Left lung (tissue), 14 donors: ENCODE measurements at regions of chr1 and their contacts with region 1.

Region 1: DNA sequence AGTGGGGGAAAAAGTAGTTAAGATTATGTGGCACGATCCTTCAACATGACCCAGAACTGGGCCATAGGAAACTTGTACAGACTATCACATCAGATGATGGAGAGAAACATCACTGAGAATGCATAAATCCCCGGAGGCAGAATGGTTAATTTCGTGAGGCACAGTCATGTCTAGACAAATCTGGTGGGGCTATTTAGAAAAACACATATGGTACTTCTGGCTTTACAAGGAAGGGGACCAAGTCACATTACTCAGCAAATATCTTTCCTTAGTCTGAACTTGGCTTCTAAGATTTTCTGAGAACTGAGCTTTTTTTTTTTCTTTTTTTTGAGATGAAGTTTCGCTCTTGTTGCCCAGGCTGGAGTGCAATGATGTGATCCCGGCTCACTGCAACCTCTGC is 9.2 kb upstream of the UQCRHL start:
- DNase-seq: no peak
- ATAC-seq: no peak
- H3K4me3 ChIP-seq: no peak overlapping the region
- H3K27ac ChIP-seq: no peak overlapping the region
- H3K4me1 ChIP-seq: peaks cover 0 to 7% of the 10 kb centered on the region in 2 donors
- H3K27me3 ChIP-seq: no peaks in the 10 kb centered on the region
- CTCF ChIP-seq: no peak

Region 2: DNA sequence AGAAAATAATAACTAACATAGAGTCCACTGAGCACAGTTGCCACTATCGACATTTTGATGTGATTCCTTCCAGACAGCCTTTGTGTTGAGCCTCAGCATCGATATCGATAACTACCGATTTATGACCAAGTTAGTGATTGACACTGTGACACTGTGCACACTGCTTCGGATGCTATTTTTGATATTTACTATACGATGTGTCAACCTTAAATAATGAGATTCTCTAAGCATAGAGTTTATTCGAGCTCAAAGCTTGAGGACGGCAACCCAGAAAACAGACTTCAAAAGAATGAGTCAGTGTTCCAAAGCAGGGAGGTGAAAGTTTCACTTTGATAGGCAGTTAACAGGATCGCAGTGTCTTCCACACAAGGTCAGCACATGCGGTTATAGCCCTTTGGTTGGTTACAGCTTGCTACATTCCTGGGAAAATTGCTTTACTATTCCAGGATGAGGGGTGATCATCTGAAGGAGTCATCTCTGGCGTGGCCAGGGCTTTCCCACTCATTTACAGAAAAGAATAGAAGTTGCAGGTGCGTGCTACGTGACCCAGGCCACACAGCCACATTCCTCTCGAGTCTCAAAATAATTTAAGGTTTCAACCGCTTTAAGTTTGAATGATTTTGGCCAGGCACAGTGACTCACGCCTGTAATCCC is 460.6 kb before region 1 on chr1:
- intact Hi-C with region 1: no loop called
- DNase-seq: no peak
- ATAC-seq: no peak
- H3K4me3 ChIP-seq: no peak overlapping the region
- H3K27ac ChIP-seq: no peak overlapping the region
- H3K4me1 ChIP-seq: no peaks in the 10 kb centered on the region
- H3K27me3 ChIP-seq: no peaks in the 10 kb centered on the region
- CTCF ChIP-seq: no peak

Region 3: GRCh38 chr1:15684468-15685291 is 132.0 kb before region 1 on chr1:
- intact Hi-C with region 1: no loop called
- DNase-seq: peak in 3 of 4 donors; percentile 52 to 87 (median 65)
- ATAC-seq: peak; percentile 42
- H3K4me3 ChIP-seq: peak overlapping the region; percentile 65 to 76
- H3K27ac ChIP-seq: peak overlapping the region; percentile 81 to 85
- H3K4me1 ChIP-seq: peaks cover 0 to 67% of the 10 kb centered on the region in 2 donors
- H3K27me3 ChIP-seq: no peaks in the 10 kb centered on the region
- CTCF ChIP-seq: peak; percentile 8 to 23

Region 4: DNA sequence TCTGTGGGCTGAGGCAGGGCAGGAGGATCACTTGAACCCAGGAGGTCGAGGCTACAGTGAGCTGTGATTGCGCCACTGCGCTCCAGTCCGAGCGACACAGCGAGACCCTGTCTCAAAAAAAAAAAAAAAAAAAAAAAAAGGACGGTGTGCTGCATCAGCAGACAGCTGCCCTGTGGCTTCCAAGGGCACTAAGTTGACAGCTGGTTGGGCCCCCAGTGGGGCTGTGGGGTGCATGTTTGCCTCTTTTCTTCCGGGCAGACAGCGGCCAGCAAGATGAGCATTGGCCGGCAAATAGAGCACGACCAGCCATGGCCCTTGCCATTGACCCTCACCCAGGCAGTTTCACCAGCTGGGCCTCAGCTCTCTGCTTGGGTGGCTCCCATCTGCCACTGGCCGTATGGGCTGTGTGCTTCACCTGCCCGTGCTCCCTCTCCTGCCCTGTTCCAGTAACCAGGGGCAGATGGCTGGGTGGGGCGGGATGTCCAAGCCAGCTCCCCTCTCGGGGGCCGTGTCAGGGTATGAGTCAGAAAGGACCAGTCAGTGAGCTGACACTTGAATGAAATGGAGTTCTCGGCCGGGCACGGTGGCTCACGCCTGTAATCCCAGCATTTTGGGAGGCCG is 92.9 kb before region 1 on chr1:
- intact Hi-C with region 1: no loop called
- DNase-seq: peak in 1 of 4 donors; percentile 72
- ATAC-seq: no peak
- H3K4me3 ChIP-seq: no peak overlapping the region
- H3K27ac ChIP-seq: no peak overlapping the region
- H3K4me1 ChIP-seq: no peaks in the 10 kb centered on the region
- H3K27me3 ChIP-seq: no peaks in the 10 kb centered on the region
- CTCF ChIP-seq: no peak

Region 5: DNA sequence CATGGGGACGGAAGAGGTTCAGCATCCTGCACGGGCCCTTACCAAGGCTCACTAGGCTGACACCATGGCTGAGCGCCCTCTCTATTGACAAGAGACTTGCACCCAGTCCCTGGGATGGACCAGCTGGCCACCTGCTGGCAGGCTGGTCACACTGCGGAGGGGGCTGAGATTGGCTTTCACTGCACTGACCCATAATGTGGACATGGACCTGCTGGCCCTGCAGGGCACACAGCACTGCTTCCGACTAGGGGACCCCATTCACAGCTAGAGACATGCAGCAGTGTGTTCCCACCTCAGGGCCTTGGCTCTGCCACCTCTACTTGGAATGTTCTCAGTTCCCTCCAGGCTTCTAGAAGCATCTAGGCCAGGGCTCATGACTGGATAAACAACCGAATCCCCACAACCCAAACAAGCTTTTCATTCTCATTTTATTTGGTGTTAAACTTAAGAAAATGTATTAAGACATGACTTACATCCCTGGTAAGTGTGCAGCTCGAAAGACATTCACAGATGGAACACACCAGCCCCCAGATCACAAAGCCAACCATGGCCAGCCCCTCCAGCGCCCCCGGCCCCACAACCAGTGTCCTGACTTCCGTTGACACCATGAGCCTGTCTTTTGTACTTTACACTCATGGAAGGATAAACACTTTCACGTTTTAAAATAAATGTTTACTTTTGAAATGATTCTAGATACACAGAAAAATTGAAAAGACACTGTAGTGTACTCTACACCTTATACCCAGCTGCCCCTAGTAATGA is 178.1 kb after region 1 on chr1:
- intact Hi-C with region 1: loop called in 1 of 2 experiments (anchors 5 kb)
- DNase-seq: peak in 3 of 4 donors; percentile 42 to 90 (median 56)
- ATAC-seq: peak; percentile 95
- H3K4me3 ChIP-seq: no peak overlapping the region
- H3K27ac ChIP-seq: no peak overlapping the region
- H3K4me1 ChIP-seq: no peaks in the 10 kb centered on the region
- H3K27me3 ChIP-seq: no peaks in the 10 kb centered on the region
- CTCF ChIP-seq: peak; percentile 77 to 88